ENCODE measurements at regions of chr11 and their contacts with region 1.

Region 1: GRCh38 chr11:134050541-134051383 is 18.1 kb upstream of the JAM3 start:
- DNase-seq: peak; percentile 76
- H3K4me3 Mint-ChIP-seq: peak overlapping the region; percentile 62
- H3K27ac Mint-ChIP-seq: peak overlapping the region; percentile 65
- H3K4me1 Mint-ChIP-seq: peaks cover 6% of the 10 kb centered on the region
- H3K27me3 Mint-ChIP-seq: peaks cover 19% of the 10 kb centered on the region

Region 2: GRCh38 chr11:133927690-133928627 is 122.8 kb before region 1 on chr11:
- CTCF ChIA-PET with region 1: interaction called, 48 read pairs
- POLR2A ChIA-PET with region 1: interaction called, 4 read pairs
- DNase-seq: peak; percentile 76
- H3K4me3 Mint-ChIP-seq: peak overlapping the region; percentile 74
- H3K27ac Mint-ChIP-seq: peak overlapping the region; percentile 88
- H3K4me1 Mint-ChIP-seq: peaks cover 37% of the 10 kb centered on the region
- H3K27me3 Mint-ChIP-seq: no peaks in the 10 kb centered on the region

Region 3: DNA sequence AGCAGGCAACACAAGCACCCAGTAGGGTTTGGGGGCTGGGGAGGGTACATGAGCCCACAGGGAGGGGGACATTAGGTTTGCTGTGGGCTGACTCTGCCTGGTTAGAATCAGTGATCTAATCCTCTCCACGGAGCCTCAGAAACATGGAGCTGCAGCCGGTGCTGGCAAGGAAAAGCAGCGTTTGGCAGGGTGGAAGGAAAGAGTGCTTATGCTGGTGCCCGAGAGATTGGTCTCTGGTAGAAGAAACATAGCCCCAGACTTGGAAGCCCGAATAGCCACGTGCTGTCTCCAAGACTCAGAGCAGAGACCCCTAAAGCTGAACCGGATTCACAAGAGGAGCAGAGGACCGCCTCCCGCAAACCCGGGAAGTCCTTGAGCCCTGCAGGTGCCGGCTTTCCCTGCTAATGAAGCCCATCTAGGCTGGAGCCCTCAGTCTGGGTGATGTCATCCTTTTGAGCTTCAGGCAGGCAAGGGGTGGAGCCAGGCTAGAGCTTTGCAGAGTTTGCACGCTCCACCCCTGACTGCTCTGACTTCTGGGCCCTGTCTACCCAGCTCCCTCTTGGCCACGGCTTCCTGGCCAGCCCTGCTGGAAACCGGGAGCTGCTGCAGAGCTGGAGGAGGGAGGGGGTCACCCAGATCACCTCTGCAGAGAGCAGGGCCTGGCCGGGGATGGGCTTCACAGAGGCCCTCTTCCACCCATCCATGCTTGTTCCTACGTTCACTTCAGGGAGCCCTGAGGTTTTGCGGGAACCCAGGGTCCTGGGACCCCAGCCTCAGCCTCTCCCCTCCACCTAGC is 16.9 kb before region 1 on chr11:
- CTCF ChIA-PET with region 1: interaction called, 26 read pairs
- POLR2A ChIA-PET with region 1: interaction called, 6 read pairs
- DNase-seq: peak; percentile 74
- H3K4me3 Mint-ChIP-seq: no peak overlapping the region
- H3K27ac Mint-ChIP-seq: peak overlapping the region; percentile 63
- H3K4me1 Mint-ChIP-seq: peaks cover 56% of the 10 kb centered on the region
- H3K27me3 Mint-ChIP-seq: peaks cover 13% of the 10 kb centered on the region

Region 4: GRCh38 chr11:134062265-134063123 is 11.7 kb after region 1 on chr11:
- CTCF ChIA-PET with region 1: interaction called, 29 read pairs
- POLR2A ChIA-PET with region 1: interaction called, 3 read pairs
- DNase-seq: no peak
- H3K4me3 Mint-ChIP-seq: no peak overlapping the region
- H3K27ac Mint-ChIP-seq: no peak overlapping the region
- H3K4me1 Mint-ChIP-seq: peaks cover 22% of the 10 kb centered on the region
- H3K27me3 Mint-ChIP-seq: peaks cover 60% of the 10 kb centered on the region

Region 5: GRCh38 chr11:134082990-134083389 is 32.2 kb after region 1 on chr11:
- CTCF ChIA-PET with region 1: interaction called, 11 read pairs
- POLR2A ChIA-PET with region 1: no interaction called
- DNase-seq: no peak
- H3K4me3 Mint-ChIP-seq: no peak overlapping the region
- H3K27ac Mint-ChIP-seq: no peak overlapping the region
- H3K4me1 Mint-ChIP-seq: no peaks in the 10 kb centered on the region
- H3K27me3 Mint-ChIP-seq: peaks cover 2% of the 10 kb centered on the region

Region 6: GRCh38 chr11:134134167-134134566 is 83.4 kb after region 1 on chr11:
- CTCF ChIA-PET with region 1: interaction called, 28 read pairs
- POLR2A ChIA-PET with region 1: no interaction called
- DNase-seq: no peak
- H3K4me3 Mint-ChIP-seq: no peak overlapping the region
- H3K27ac Mint-ChIP-seq: no peak overlapping the region
- H3K4me1 Mint-ChIP-seq: no peaks in the 10 kb centered on the region
- H3K27me3 Mint-ChIP-seq: peaks cover 14% of the 10 kb centered on the region